Left colon (tissue), 2 donors: ENCODE measurements at regions of chr6 and their contacts with region 1.

Region 1: DNA sequence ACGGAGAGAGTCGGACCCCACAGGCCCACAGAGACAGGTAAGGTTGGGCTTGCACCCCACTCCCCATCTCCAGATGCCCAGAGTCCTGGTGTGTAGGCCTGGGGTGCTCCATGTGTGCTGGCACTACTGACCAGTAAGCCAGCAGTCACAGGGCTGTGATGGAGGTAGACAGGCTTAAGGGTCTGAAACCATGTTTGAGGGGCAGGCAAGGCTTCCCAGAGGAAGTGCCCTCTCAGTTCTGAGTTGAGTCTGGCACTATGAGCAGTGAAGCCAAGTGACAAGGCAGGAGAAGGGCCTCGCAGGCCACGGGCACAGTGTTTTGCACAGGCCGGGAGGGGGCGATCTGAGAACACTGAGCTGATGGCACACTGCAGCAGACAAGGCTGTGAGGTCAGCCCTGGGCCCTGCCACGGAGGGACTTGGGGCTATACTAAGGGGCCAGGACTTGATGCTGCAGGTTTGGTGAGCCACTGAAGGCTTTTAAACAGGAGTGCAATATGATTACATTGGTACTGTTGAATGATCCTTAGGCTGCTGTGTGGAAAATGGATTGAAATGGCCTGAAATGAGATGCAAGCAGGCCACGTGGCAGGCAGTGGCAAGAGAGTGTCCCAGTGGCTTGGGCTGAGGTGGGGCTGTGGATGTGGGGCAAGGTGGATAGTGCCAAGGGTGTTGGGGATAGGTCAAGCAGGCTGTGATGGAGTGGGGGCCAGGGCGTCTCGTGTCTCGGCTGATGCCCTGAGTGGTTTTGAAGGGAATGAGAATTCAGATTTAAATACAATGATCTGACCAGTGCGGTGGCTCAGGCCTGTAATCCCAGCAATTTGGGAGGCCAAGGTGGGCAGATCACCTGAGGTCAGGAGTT is 20.3 kb downstream of the TTBK1 start:
- DNase-seq: peak; percentile 75 to 86
- ATAC-seq: peak; percentile 80

Region 2: GRCh38 chr6:43334466-43335095 is 71.0 kb after region 1 on chr6:
- intact Hi-C with region 1: loop called (anchors 2 to 10 kb)
- DNase-seq: no peak
- ATAC-seq: peak; percentile 81

Region 3: GRCh38 chr6:43506667-43507471 is 243.3 kb after region 1 on chr6:
- intact Hi-C with region 1: loop called in 1 of 2 experiments (anchors 10 kb)
- DNase-seq: peak; percentile 62 to 81
- ATAC-seq: peak; percentile 34